Activated B cell treated with CpG ODN at 0.5 μM for 24 hours (primary cell): ENCODE measurements at regions of chr14 and their contacts with region 1.

Region 1: DNA sequence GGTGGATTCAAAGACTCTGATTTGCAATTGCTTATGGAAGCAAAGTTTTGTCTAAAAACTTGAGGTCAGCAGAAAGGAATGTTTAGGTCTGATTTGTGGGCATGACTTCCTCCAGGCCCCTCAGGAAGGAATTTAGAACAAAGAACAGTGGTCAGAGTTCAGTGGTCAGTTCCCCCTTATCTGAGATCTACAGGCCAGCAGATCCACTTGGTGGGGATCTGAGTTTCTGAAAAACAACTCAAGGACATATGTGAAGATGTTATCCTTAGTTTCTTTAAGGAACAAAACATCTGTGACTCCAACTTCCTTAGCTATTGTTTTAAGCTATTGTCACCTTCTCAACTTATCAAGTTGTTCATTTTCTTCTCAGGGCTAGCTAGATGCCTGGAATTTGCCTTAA is 28.0 kb upstream of the NAA30 start:
- DNase-seq: no peak
- ATAC-seq: no peak
- H3K4me3 Mint-ChIP-seq: no peak overlapping the region
- H3K27ac Mint-ChIP-seq: no peak overlapping the region
- H3K4me1 Mint-ChIP-seq: no peaks in the 10 kb centered on the region
- H3K27me3 Mint-ChIP-seq: peaks cover 23% of the 10 kb centered on the region
- CTCF ChIP-seq: no peak

Region 2: DNA sequence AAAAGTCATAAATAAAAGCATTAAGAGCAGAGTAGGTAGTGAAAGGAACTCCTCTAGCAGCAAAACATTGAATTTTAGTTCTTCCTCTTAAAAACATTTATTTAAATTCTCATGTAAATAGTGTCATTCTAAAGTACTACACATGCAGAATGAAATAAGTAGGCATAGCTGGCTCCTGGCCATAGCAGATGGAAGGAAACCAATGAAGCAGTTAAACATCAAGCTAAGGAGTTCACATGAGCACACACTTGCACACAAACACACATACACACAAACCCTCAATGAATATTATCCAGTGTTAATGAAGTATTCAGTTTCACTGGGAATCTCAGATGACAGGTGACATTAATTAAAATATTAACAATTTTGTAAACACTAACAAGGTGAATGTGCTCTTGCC is 434.2 kb after region 1 on chr14:
- CTCF ChIA-PET with region 1: no interaction called
- POLR2A ChIA-PET with region 1: no interaction called
- intact Hi-C with region 1: loop called (anchors 5 kb)
- DNase-seq: no peak
- ATAC-seq: no peak
- H3K4me3 Mint-ChIP-seq: no peak overlapping the region
- H3K27ac Mint-ChIP-seq: no peak overlapping the region
- H3K4me1 Mint-ChIP-seq: no peaks in the 10 kb centered on the region
- H3K27me3 Mint-ChIP-seq: no peaks in the 10 kb centered on the region
- CTCF ChIP-seq: no peak